ENCODE measurements at regions of chr1 and their contacts with region 1.

Region 1: GRCh38 chr1:8910914-8911313 is 32.4 kb upstream of the ENO1 start:
- DNase-seq: no peak
- H3K4me3 ChIP-seq: no peak overlapping the region
- H3K27ac ChIP-seq: no peak overlapping the region
- H3K4me1 ChIP-seq: no peaks in the 10 kb centered on the region
- H3K27me3 ChIP-seq: no peaks in the 10 kb centered on the region
- CTCF ChIP-seq: no peak
- POLR2A ChIP-seq: no peak

Region 2: DNA sequence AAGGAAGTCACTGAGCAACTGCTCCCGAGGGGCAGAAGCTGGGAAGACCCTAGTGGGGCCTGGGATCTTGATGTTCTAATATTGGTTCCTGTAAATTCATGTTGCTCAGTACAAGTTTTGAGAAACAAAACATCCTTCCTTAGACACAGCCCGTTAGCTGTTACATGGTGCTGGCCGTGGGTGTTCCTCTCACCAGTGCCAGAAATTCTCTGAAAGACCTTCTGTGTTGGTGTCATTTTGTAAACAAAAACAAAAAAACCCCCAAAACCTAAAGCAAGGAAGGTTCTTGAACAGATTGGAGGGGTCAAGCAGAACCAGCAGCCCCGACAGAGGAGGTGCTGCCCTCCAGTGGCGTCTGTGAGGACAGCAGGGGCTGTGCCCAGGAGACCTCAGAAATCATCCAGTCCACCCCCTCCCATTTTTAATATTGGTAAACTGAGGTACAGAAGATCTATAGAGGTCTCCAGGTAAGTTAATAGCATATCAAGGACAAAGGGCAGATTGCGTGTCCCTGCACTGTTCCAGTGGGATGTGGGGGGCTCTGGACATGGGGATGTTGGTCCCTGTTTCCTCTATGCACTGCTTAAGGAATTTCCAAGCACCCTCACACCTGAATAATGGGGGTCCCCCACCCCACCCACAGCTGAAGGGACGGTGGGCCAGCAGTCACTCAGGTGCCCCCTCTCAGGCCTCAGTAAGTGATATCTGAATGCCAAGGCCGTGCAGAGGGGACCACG is 77.1 kb after region 1 on chr1:
- intact Hi-C with region 1: loop called (anchors 5 kb)
- DNase-seq: peak; percentile 51
- H3K4me3 ChIP-seq: no peak overlapping the region
- H3K27ac ChIP-seq: peak overlapping the region; percentile 57 to 87
- H3K4me1 ChIP-seq: no peaks in the 10 kb centered on the region
- H3K27me3 ChIP-seq: no peaks in the 10 kb centered on the region
- CTCF ChIP-seq: peak; percentile 78 to 89 (median 88)
- POLR2A ChIP-seq: no peak

Region 3: GRCh38 chr1:9101510-9102146 is 190.7 kb after region 1 on chr1:
- intact Hi-C with region 1: loop called (anchors 5 kb)
- DNase-seq: peak; percentile 68
- H3K4me3 ChIP-seq: no peak overlapping the region
- H3K27ac ChIP-seq: no peak overlapping the region
- H3K4me1 ChIP-seq: no peaks in the 10 kb centered on the region
- H3K27me3 ChIP-seq: no peaks in the 10 kb centered on the region
- CTCF ChIP-seq: peak in 3 of 4 experiments; percentile 72 to 76 (median 74)
- POLR2A ChIP-seq: no peak

Region 4: GRCh38 chr1:9181176-9181906 is 270.4 kb after region 1 on chr1:
- intact Hi-C with region 1: loop called (anchors 10 kb)
- DNase-seq: no peak
- H3K4me3 ChIP-seq: peak overlapping the region; percentile 48 to 74
- H3K27ac ChIP-seq: peak overlapping the region; percentile 53 to 67
- H3K4me1 ChIP-seq: no peaks in the 10 kb centered on the region
- H3K27me3 ChIP-seq: no peaks in the 10 kb centered on the region
- CTCF ChIP-seq: peak; percentile 74 to 85 (median 80)
- POLR2A ChIP-seq: no peak

Measured in prostate gland (tissue), 2 donors.